ENCODE measurements at regions of chr11 and their contacts with region 1.

Region 1: DNA sequence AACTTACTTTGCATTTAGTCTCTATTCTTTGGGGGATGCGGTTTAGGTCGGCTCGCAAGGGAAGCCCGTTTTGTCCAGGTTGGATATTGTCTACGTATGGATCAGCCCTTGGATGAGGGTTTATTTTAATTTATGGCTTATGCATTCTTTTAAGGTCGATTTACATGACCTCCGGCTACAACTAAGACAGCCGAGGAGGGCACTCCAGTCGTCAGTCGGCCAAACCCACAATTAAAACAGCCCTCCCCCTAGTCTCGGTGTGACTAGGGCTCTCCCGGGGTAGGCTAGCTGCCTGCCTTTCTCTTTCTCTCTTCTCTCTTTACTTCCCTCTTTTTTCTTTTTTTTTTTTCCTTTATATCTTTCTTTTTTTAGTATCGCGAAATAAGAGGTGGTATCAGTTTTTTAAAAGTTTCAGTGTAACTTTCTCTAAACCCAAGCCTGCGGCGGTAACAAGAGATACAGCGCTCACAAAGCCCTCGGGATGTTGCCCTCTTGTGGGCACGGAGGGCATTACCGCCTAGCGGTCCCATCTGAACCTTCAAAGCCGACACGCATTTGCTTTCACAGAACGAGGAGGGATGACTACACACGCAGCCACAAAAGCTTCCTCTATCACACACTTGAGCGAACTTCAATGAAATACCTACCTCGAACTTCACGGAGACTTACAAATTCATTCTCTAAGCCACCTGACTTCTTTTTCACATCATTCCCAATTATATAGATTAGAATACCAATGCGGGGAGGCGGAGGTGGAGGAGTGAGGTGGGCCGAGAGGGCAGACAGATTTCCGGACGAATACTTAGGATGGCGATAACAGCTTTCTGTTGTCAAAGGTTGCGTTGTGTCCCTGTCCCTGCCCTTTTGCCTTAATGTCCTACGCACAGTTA is 132.3 kb upstream of the C11orf58 start:
- DNase-seq: peak; percentile 75
- ATAC-seq: peak; percentile 71
- H3K4me3 ChIP-seq: peak overlapping the region in 2 of 3 experiments; percentile 59 to 72; a peak in 4 of 6 replicates
- H3K27ac ChIP-seq: no peak overlapping the region
- H3K4me1 ChIP-seq: peaks cover 47% of the 10 kb centered on the region
- H3K27me3 ChIP-seq: peaks cover 9 to 74% of the 10 kb centered on the region in 2 experiments
- CTCF ChIP-seq: peak; percentile 90
- EP300 ChIP-seq: no peak
- POLR2A ChIP-seq: no peak
- RAD21 ChIP-seq: peak; percentile 64

Region 2: GRCh38 chr11:15901054-15901453 is 705.1 kb before region 1 on chr11:
- CTCF ChIA-PET with region 1: interaction called, 5 read pairs
- POLR2A ChIA-PET with region 1: no interaction called
- in situ Hi-C with region 1: loop called (anchors 5 kb)
- intact Hi-C with region 1: no loop called
- DNase-seq: peak; percentile 16
- ATAC-seq: peak; percentile 93
- H3K4me3 ChIP-seq: no peak overlapping the region
- H3K27ac ChIP-seq: no peak overlapping the region
- H3K4me1 ChIP-seq: peaks cover 11% of the 10 kb centered on the region
- H3K27me3 ChIP-seq: 0 out of 5 replicates have a peak, but pooled peaks cover 0 to 5% of the 10 kb centered on the region in 2 experiments
- CTCF ChIP-seq: peak; percentile 82
- EP300 ChIP-seq: no peak
- POLR2A ChIP-seq: no peak
- RAD21 ChIP-seq: no peak

Region 3: GRCh38 chr11:16184588-16184987 is 421.6 kb before region 1 on chr11:
- CTCF ChIA-PET with region 1: no interaction called
- POLR2A ChIA-PET with region 1: no interaction called
- in situ Hi-C with region 1: loop called (anchors 10 kb)
- intact Hi-C with region 1: no loop called
- DNase-seq: peak; percentile 94
- ATAC-seq: peak; percentile 100
- H3K4me3 ChIP-seq: peak overlapping the region in 1 of 3 experiments; percentile 27; a peak in 1 of 6 replicates
- H3K27ac ChIP-seq: peak overlapping the region; percentile 70
- H3K4me1 ChIP-seq: peaks cover 45% of the 10 kb centered on the region
- H3K27me3 ChIP-seq: no peaks in the 10 kb centered on the region
- CTCF ChIP-seq: no peak
- EP300 ChIP-seq: peak; percentile 64 to 86; a peak in 3 of 4 replicates
- POLR2A ChIP-seq: no peak
- RAD21 ChIP-seq: peak; percentile 34; the same call in 1 of the 2 replicates

Region 4: DNA sequence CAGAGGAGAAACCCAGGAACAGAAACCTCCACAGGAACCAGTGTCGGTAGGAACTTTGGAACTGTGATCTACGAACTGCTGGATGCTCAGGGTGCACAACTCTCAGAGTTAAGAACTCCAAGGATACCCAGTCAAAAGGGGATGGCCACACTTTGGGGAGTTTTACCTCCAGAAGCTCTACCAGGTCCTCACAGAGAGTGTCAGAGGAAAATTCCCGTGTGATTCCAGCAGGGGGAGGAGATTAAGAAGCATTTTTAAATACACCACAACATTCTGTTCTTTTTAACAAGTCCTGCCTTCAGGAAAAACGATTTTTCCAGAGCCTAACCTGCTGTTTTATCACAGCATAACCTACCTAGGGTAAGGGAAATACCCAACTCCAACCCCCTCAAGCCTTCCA is 353.8 kb before region 1 on chr11:
- CTCF ChIA-PET with region 1: no interaction called
- POLR2A ChIA-PET with region 1: no interaction called
- in situ Hi-C with region 1: no loop called
- intact Hi-C with region 1: loop called (anchors 2 kb)
- DNase-seq: peak; percentile 12
- ATAC-seq: peak; percentile 77
- H3K4me3 ChIP-seq: no peak overlapping the region
- H3K27ac ChIP-seq: no peak overlapping the region
- H3K4me1 ChIP-seq: peaks cover 8% of the 10 kb centered on the region
- H3K27me3 ChIP-seq: no peaks in the 10 kb centered on the region
- CTCF ChIP-seq: no peak; the same call in 1 of the 2 replicates
- EP300 ChIP-seq: no peak
- POLR2A ChIP-seq: no peak
- RAD21 ChIP-seq: no peak

Region 5: DNA sequence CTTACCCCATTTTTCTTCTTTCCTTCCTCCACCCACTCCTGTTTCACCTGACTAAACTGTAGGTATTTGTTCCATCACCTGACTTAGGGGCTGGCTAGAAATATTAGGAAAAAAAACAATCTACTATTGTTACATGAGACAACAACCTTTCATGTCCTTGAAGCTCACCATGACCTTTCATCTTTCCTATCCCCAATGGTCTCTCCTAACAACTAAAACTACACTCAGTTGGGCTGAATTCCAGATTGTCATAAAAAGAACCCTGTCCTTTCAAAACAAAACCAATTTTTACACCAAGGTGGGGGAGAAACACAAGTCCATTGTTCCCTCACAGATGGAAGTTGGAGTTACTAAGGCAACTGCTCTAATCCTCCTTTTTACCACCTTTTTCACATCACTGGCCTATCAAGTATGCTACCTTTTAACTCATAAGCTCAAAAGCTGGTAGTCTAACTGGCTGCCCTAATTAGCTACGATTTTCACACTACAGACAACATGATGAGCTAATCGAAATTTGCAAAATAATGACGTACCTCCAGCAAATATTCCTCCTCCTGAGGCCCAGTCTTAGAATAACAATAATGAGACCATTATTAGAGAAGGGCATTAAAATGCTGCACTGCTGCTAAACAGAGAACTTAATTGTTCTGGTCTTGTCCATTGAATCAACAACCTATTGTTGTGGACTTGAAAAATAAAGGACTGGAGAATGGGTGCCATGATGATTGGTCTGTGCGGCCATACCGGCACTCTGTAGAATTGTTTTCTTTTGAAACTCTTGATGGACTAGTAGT is 203.3 kb before region 1 on chr11:
- CTCF ChIA-PET with region 1: no interaction called
- POLR2A ChIA-PET with region 1: interaction called, 3 read pairs
- in situ Hi-C with region 1: no loop called
- intact Hi-C with region 1: loop called (anchors 10 kb)
- DNase-seq: peak; percentile 92
- ATAC-seq: peak; percentile 88
- H3K4me3 ChIP-seq: peak overlapping the region in 1 of 3 experiments; percentile 2; a peak in 1 of 6 replicates
- H3K27ac ChIP-seq: peak overlapping the region; percentile 72
- H3K4me1 ChIP-seq: peaks cover 68% of the 10 kb centered on the region
- H3K27me3 ChIP-seq: no peaks in the 10 kb centered on the region
- CTCF ChIP-seq: no peak
- EP300 ChIP-seq: peak; percentile 22 to 56; a peak in 1 of 4 replicates
- POLR2A ChIP-seq: no peak
- RAD21 ChIP-seq: no peak

Measured in HepG2 (cell line).